ENCODE measurements at regions of chr5 and their contacts with region 1.

Region 1: DNA sequence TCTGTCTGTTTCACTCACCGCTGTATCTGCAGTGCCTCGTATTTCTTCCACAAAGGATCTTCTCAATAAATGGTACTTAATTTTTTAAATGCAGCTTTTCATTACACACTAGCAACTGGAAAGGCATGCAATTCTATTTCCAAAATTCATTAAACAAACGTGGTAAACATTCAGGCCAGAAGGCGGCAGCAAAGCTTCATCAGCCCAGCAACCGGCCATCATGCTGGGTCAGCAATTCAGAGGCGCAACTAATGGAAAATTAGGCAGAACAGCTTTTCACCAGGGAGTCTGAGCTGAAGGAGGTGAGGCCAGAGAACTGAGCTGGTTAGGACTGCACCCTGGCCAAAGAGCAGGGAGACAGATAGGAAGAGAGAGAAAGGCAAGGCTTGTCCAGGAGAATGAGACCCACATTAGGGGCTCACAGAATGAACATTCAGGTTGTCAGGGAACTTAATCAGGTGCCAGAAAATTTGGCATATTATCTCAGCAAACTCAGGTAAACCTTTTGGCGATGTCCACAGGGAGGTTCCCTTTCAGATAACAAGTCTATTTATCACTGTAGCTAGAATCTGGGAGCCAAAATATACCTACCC is 17.7 kb upstream of the RNF180 start:
- DNase-seq: peak; percentile 10
- H3K4me3 ChIP-seq: no peak overlapping the region
- H3K27ac ChIP-seq: no peak overlapping the region
- H3K4me1 ChIP-seq: no peaks in the 10 kb centered on the region
- CTCF ChIP-seq: peak; percentile 76

Region 2: DNA sequence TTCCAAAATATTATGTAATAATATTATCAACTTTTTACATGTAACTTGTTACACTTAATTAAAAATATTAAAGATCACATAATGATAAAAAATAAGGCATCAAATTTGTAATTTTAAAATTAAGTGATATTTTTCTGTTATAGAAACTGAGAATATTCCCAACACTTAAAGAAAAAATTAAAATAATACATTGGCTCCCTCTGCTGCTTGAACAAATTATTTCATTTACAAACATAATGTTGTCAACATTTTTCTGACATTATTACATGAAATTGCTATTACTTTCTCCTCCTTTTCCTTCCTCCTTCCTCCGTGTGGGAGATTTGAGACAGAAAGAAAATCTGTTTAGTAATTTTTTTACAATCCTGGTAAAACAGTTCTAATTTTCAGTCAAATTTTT is 60.0 kb after region 1 on chr5:
- CTCF ChIA-PET with region 1: no interaction called
- POLR2A ChIA-PET with region 1: no interaction called
- intact Hi-C with region 1: loop called (anchors 5 kb)
- DNase-seq: peak; percentile 5
- H3K4me3 ChIP-seq: no peak overlapping the region
- H3K27ac ChIP-seq: no peak overlapping the region
- H3K4me1 ChIP-seq: no peaks in the 10 kb centered on the region
- CTCF ChIP-seq: peak; percentile 71

Region 3: GRCh38 chr5:64347309-64347708 is 199.4 kb after region 1 on chr5:
- CTCF ChIA-PET with region 1: no interaction called
- POLR2A ChIA-PET with region 1: no interaction called
- intact Hi-C with region 1: no loop called
- DNase-seq: no peak
- H3K4me3 ChIP-seq: no peak overlapping the region
- H3K27ac ChIP-seq: no peak overlapping the region
- H3K4me1 ChIP-seq: no peaks in the 10 kb centered on the region
- CTCF ChIP-seq: peak; percentile 36; the same call in 1 of the 2 replicates